ENCODE measurements at regions of chr15 and their contacts with region 1.

Region 1: DNA sequence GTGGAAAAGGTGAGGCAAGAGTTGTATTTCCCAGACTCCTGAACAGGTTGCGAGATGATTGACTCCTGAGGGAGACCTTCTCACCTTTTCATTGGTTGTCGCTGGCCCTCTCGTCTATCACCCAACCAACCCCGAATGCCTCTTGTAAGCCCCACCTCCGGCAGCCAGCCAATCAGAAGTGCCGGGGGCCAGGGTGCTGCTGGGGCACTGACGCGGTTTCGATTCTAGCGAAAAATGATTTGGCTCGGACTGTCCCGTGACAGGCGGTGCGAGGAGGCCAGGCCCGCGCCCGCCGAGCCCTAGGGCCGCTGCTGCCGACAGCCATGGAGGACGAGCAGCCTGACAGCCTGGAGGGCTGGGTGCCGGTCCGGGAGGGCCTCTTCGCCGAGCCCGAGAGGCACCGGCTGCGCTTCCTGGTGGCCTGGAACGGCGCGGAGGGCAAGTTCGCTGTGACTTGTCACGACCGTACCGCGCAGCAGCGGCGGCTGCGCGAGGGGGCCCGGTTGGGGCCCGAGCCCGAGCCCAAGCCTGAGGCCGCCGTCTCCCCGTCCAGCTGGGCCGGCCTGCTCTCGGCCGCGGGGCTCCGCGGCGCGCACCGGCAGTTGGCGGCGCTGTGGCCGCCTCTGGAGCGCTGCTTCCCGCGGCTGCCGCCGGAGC is at the start of gene WHAMM:
- DNase-seq: peak; percentile 96 to 100 (median 99)

Region 2: GRCh38 chr15:82530606-82531379 is 278.7 kb before region 1 on chr15:
- intact Hi-C with region 1: loop called (anchors 10 kb)
- DNase-seq: peak in 8 of 10 donors; percentile 46 to 90 (median 62)

Measured in posterior cingulate gyrus (tissue), 11 donors.